Naive thymus-derived CD8-positive, alpha-beta T cell (primary cell): ENCODE measurements at regions of chr5 and their contacts with region 1.

Region 1: DNA sequence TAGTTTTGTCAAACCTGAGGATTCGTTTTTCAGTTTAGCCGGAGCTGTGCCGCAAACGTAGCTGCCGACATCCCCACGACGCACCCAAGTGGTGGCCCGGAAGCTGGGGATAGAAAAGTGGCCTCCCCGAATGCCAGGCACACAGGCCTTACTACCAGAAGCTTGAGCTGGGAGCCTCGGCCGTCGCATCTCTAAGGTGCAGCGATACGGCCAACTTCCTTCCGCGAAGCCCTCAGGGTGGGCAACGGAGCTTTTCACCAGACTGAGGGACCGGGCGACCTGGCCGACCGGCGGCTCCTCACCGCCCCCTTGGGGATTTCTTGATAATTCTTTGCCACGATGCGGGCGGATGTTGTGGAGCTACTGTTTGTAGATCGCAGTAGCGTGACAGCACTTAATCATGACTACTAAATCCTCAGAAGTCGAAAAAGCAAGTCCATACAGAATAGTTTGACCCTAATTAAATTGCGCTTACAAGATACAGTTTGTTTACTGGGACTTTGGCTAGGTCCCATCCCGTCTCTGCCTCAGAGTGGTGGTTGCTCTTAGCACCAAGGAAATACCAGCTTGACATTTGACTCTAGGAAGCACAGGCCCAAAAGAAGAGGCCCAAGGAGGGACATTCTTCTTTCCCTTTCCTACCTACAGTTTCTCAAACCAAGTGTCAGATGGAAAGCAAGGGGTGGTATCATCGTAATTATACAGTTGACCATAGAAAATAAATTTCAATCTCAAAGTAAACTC is 613 bp upstream of the TMEM267 start:
- DNase-seq: peak; percentile 66 to 92 (median 87)
- ATAC-seq: peak; percentile 71 to 73
- H3K4me3 Mint-ChIP-seq: peak overlapping the region; percentile 85 to 99 (median 98)
- H3K27ac Mint-ChIP-seq: peak overlapping the region; percentile 99 to 100 (median 100)
- H3K4me1 Mint-ChIP-seq: peaks cover 13 to 53% (median 41%) of the 10 kb centered on the region in 4 donors
- H3K27me3 Mint-ChIP-seq: no peaks in the 10 kb centered on the region

Region 2: GRCh38 chr5:42908509-42909488 is 575.5 kb before region 1 on chr5:
- POLR2A ChIA-PET with region 1: interaction called, 16 read pairs
- DNase-seq: peak; percentile 78 to 96 (median 90)
- ATAC-seq: peak; percentile 92 to 93
- H3K4me3 Mint-ChIP-seq: peak overlapping the region; percentile 82 to 98 (median 94)
- H3K27ac Mint-ChIP-seq: peak overlapping the region; percentile 89 to 98 (median 97)
- H3K4me1 Mint-ChIP-seq: peaks cover 2 to 22% (median 18%) of the 10 kb centered on the region in 4 donors
- H3K27me3 Mint-ChIP-seq: peaks cover 0 to 3% (median 0%) of the 10 kb centered on the region in 5 donors

Region 3: GRCh38 chr5:42994246-42995151 is 489.8 kb before region 1 on chr5:
- POLR2A ChIA-PET with region 1: interaction called, 82 read pairs
- DNase-seq: peak; percentile 71 to 93 (median 87)
- ATAC-seq: peak; percentile 56 to 63
- H3K4me3 Mint-ChIP-seq: peak overlapping the region; percentile 87 to 100 (median 100)
- H3K27ac Mint-ChIP-seq: peak overlapping the region; percentile 97 to 100 (median 100)
- H3K4me1 Mint-ChIP-seq: peaks cover 12 to 38% (median 31%) of the 10 kb centered on the region in 4 donors
- H3K27me3 Mint-ChIP-seq: no peaks in the 10 kb centered on the region

Region 4: GRCh38 chr5:43040287-43041098 is 443.8 kb before region 1 on chr5 and contains the start of gene ANXA2R:
- POLR2A ChIA-PET with region 1: interaction called, 100 read pairs
- DNase-seq: peak; percentile 78 to 98 (median 95)
- ATAC-seq: peak; percentile 51 to 56
- H3K4me3 Mint-ChIP-seq: peak within 1 kb of the TSS; percentile 95 to 100 (median 98)
- H3K27ac Mint-ChIP-seq: peak within 1 kb of the TSS; percentile 96 to 100 (median 99)
- H3K4me1 Mint-ChIP-seq: peaks cover 19 to 61% (median 52%) of the 10 kb centered on the region in 4 donors
- H3K27me3 Mint-ChIP-seq: no peaks in the 10 kb centered on the region
- polyA plus RNA-seq, gene ANXA2R: 51.5 to 69.8 (median 54.8) TPM

Region 5: DNA sequence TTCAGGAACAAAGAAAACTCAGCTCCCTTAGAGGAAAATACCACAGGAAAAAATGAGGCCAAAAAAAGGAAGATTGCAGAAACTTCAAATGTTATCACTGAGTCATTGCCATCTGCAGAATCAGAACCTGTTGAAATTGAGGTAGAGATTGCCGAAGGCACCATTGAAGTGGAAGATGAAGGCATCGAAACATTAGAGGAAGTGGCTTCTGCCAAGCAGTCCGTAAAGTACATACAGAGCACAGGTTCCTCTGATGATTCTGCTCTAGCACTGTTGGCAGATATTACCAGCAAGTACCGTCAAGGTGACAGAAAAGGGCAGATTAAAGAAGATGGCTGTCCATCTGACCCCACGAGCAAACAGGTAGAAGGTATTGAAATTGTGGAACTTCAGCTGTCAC is 323.0 kb before region 1 on chr5:
- POLR2A ChIA-PET with region 1: interaction called, 10 read pairs
- DNase-seq: peak in 8 of 10 donors; percentile 2 to 64 (median 26)
- ATAC-seq: peak; percentile 95 to 97
- H3K4me3 Mint-ChIP-seq: peak overlapping the region in 7 of 10 donors; percentile 9 to 55 (median 37)
- H3K27ac Mint-ChIP-seq: peak overlapping the region; percentile 31 to 90 (median 72)
- H3K4me1 Mint-ChIP-seq: peaks cover 19 to 38% (median 30%) of the 10 kb centered on the region in 4 donors
- H3K27me3 Mint-ChIP-seq: no peaks in the 10 kb centered on the region

Region 6: GRCh38 chr5:43409809-43410271 is 74.4 kb before region 1 on chr5:
- POLR2A ChIA-PET with region 1: no interaction called
- DNase-seq: no peak
- ATAC-seq: no peak
- H3K4me3 Mint-ChIP-seq: no peak overlapping the region
- H3K27ac Mint-ChIP-seq: no peak overlapping the region
- H3K4me1 Mint-ChIP-seq: no peaks in the 10 kb centered on the region
- H3K27me3 Mint-ChIP-seq: no peaks in the 10 kb centered on the region

Region 7: GRCh38 chr5:43514816-43515677 is 30.8 kb after region 1 on chr5 and contains the start of gene C5orf34:
- POLR2A ChIA-PET with region 1: interaction called, 61 read pairs
- DNase-seq: peak; percentile 86 to 96 (median 91)
- ATAC-seq: peak; percentile 86
- H3K4me3 Mint-ChIP-seq: peak within 1 kb of the TSS; percentile 91 to 99 (median 96)
- H3K27ac Mint-ChIP-seq: peak within 1 kb of the TSS; percentile 93 to 99 (median 98)
- H3K4me1 Mint-ChIP-seq: peaks cover 16 to 38% (median 32%) of the 10 kb centered on the region in 4 donors
- H3K27me3 Mint-ChIP-seq: no peaks in the 10 kb centered on the region
- polyA plus RNA-seq, gene C5orf34: 0.77 to 2.0 (median 0.87) TPM